Activated naive CD4-positive, alpha-beta T cell treated with anti-CD3 and anti-CD28 coated beads for 36 hours (primary cell): ENCODE measurements at regions of chr10 and their contacts with region 1.

Region 1: GRCh38 chr10:31031558-31032257 is at the start of gene ZNF438:
- DNase-seq: peak; percentile 93
- H3K4me3 Mint-ChIP-seq: peak within 1 kb of the TSS; percentile 86
- H3K27ac Mint-ChIP-seq: peak within 1 kb of the TSS; percentile 98
- H3K4me1 Mint-ChIP-seq: peaks cover 16% of the 10 kb centered on the region
- H3K27me3 Mint-ChIP-seq: no peaks in the 10 kb centered on the region
- total RNA-seq, gene ZNF438: 2.4 to 2.6 TPM

Region 2: GRCh38 chr10:30986053-30986555 is 45.6 kb before region 1 on chr10:
- CTCF ChIA-PET with region 1: interaction called, 4 read pairs
- intact Hi-C with region 1: loop called (anchors 1 kb)
- DNase-seq: no peak
- H3K4me3 Mint-ChIP-seq: no peak overlapping the region
- H3K27ac Mint-ChIP-seq: peak overlapping the region; percentile 55
- H3K4me1 Mint-ChIP-seq: peaks cover 12% of the 10 kb centered on the region
- H3K27me3 Mint-ChIP-seq: no peaks in the 10 kb centered on the region

Region 3: DNA sequence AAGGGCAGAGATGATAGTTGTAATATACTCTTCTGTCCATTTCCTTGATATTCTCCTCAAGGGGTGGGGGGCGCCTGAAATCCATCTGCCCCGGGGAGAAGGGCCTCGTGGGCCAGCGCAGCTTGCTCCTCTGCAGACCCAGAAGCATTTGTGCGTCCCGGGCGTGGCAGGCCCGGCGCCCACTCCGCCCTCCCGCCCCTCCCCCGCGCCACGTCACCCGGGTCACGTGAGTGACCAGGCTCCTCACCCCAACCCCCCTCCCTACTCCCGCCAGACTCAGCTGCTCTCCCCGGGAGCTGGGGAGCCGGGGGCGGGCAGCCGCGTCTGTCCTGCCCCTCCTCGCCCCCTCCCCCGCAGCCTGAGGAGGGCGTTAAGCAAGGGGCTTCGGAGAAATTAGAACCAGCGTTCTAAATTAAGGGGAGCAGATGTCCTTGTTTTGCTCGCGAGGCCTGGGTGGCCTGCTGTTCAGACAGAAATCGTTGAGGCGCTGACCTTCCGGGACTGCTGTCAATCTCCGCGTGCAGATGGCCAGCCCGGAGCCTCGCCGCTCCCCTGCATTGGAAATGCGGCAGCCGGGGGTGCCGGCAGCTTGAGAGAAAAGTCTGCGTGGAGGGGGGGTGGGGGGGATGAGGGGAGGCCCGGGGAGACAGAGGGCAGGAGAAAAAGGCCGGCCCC is 102.1 kb after region 1 on chr10:
- CTCF ChIA-PET with region 1: no interaction called
- intact Hi-C with region 1: loop called (anchors 5 kb)
- DNase-seq: peak; percentile 76
- H3K4me3 Mint-ChIP-seq: peak overlapping the region; percentile 68
- H3K27ac Mint-ChIP-seq: no peak overlapping the region
- H3K4me1 Mint-ChIP-seq: peaks cover 37% of the 10 kb centered on the region
- H3K27me3 Mint-ChIP-seq: no peaks in the 10 kb centered on the region

Region 4: GRCh38 chr10:31603235-31604087 is 571.8 kb after region 1 on chr10:
- CTCF ChIA-PET with region 1: no interaction called
- intact Hi-C with region 1: loop called (anchors 1 kb)
- DNase-seq: peak; percentile 92
- H3K4me3 Mint-ChIP-seq: peak overlapping the region; percentile 86
- H3K27ac Mint-ChIP-seq: peak overlapping the region; percentile 58
- H3K4me1 Mint-ChIP-seq: peaks cover 31% of the 10 kb centered on the region
- H3K27me3 Mint-ChIP-seq: peaks cover 2% of the 10 kb centered on the region

Region 5: DNA sequence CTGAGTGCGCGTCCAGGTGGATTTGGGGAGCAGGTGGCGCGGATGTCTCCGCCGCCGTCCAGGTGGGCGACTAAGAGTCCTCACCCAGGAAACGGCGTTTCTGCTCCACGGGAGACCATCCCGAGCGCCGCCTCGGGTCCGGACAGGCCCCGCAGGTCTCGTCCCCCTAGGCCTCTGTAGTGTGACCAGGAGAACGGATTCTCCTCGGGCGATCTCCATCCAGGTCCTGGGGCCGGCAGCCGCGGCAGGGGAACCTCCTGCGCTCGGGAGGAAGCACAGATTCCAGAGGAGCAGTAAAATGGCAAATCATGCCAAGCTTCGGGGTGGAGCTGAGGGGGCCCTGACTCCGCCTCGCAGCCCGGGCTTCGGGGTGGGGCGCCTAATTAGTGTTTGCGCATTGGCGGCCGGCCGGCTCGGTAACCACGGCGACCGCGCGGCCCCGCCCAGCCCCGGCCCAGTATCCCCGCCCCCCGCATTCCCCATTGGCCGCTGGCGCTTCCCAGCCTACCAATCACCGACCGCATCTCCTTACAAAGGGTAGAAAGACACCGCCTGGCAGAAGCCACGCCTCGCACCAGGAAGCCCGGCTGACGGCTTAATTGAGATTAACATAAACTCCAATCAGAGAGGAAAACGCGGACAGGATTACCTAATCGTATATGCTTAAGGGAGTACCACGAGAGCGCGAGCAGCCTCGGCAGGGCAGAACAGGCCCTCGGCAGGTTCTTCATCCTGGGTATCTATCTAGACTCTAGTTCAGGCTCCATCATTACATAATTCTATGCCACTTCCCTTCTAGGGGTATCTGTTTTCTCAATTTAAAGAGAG is 728.3 kb after region 1 on chr10:
- CTCF ChIA-PET with region 1: no interaction called
- intact Hi-C with region 1: loop called (anchors 1 kb)
- DNase-seq: peak; percentile 96
- H3K4me3 Mint-ChIP-seq: peak overlapping the region; percentile 94
- H3K27ac Mint-ChIP-seq: peak overlapping the region; percentile 95
- H3K4me1 Mint-ChIP-seq: peaks cover 18% of the 10 kb centered on the region
- H3K27me3 Mint-ChIP-seq: no peaks in the 10 kb centered on the region